HepG2 (cell line): ENCODE measurements at regions of chr11 and their contacts with region 1.

Region 1: DNA sequence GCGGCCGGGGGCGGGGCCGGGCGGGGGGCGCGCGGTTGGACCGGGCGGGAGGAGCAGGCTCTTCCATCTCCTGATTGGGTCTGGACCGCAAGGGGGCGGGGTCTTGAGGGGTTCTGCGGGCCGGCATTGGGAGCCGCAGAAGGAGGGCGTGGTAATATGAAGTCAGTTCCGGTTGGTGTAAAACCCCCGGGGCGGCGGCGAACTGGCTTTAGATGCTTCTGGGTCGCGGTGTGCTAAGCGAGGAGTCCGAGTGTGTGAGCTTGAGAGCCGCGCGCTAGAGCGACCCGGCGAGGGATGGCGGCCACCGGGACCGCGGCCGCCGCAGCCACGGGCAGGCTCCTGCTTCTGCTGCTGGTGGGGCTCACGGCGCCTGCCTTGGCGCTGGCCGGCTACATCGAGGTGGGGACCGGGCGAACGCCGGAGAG is at the start of gene APLP2:
- DNase-seq: peak; percentile 97
- ATAC-seq: peak; percentile 78
- H3K4me3 ChIP-seq: peak within 1 kb of the TSS; percentile 84 to 98 (median 97)
- H3K27ac ChIP-seq: peak within 1 kb of the TSS; percentile 71
- H3K4me1 ChIP-seq: peaks cover 39% of the 10 kb centered on the region
- H3K27me3 ChIP-seq: no peaks in the 10 kb centered on the region
- CTCF ChIP-seq: 0 out of 2 replicates have a peak, but pooled peaks have one; percentile 10
- EP300 ChIP-seq: no peak
- POLR2A ChIP-seq: peak; percentile 98 to 99
- RAD21 ChIP-seq: peak; percentile 57
- total RNA-seq, gene APLP2: 154 and 315 TPM in 2 replicates

Region 2: DNA sequence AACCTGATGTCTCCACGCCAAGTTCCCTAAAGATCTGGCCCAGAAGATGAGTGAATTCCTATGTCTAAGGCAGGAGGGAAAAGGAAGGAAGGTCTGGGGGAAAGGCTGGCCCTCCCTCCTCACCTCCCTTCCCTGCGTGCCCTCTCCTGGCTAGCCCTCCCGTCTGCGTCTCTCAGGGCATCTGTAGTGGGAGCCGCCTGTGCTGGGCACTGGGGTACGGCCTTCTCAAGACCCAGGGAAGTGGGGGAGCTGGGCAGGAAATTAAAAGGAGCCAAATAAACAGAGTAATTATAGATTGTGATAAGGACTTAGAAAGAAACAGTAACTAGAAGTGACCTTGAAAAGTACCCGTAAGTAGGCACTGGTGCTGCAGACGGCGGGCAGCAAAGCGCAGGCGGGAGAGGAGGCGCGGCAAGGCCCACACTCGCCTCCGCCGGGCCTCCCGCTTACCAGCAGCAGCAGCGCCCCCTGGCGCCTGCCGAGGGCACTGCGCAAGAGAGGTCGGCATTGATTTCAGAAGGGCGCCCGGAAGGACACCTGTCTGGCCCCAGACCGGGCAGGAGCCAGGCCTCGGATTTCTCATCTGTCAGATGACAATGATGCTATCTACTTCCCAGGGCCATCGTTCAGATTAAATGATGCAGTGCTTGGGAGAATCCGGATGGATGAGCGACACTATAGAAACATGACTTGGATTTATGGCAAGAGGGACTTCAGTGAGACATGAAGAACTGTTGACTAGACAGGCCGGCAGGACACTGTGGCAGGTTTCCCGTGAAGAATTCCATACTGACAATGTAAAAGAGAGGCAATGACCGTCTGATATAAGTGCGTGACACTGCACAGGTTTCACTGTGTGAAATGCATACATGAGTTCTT is 1209.9 kb before region 1 on chr11:
- CTCF ChIA-PET with region 1: no interaction called
- POLR2A ChIA-PET with region 1: no interaction called
- in situ Hi-C with region 1: no loop called
- intact Hi-C with region 1: no loop called
- DNase-seq: peak; percentile 35
- ATAC-seq: peak; percentile 94
- H3K4me3 ChIP-seq: no peak overlapping the region
- H3K27ac ChIP-seq: no peak overlapping the region
- H3K4me1 ChIP-seq: no peaks in the 10 kb centered on the region
- H3K27me3 ChIP-seq: peaks cover 5 to 51% of the 10 kb centered on the region in 2 experiments; a peak in 4 of 5 replicates
- CTCF ChIP-seq: peak; percentile 85
- EP300 ChIP-seq: no peak
- POLR2A ChIP-seq: no peak
- RAD21 ChIP-seq: peak; percentile 55; the same call in 1 of the 2 replicates

Region 3: GRCh38 chr11:129611661-129612446 is 457.8 kb before region 1 on chr11:
- CTCF ChIA-PET with region 1: no interaction called
- POLR2A ChIA-PET with region 1: no interaction called
- in situ Hi-C with region 1: no loop called
- intact Hi-C with region 1: no loop called
- DNase-seq: no peak
- ATAC-seq: peak; percentile 58
- H3K4me3 ChIP-seq: no peak overlapping the region
- H3K27ac ChIP-seq: no peak overlapping the region
- H3K4me1 ChIP-seq: no peaks in the 10 kb centered on the region
- H3K27me3 ChIP-seq: peaks cover 0 to 29% of the 10 kb centered on the region in 2 experiments; a peak in 1 of 5 replicates
- CTCF ChIP-seq: no peak
- EP300 ChIP-seq: no peak
- POLR2A ChIP-seq: no peak
- RAD21 ChIP-seq: no peak

Region 4: GRCh38 chr11:129695575-129696308 is 374.0 kb before region 1 on chr11:
- CTCF ChIA-PET with region 1: no interaction called
- POLR2A ChIA-PET with region 1: no interaction called
- in situ Hi-C with region 1: no loop called
- intact Hi-C with region 1: no loop called
- DNase-seq: peak; percentile 46
- ATAC-seq: peak; percentile 97
- H3K4me3 ChIP-seq: peak overlapping the region; percentile 11 to 69 (median 46)
- H3K27ac ChIP-seq: no peak overlapping the region
- H3K4me1 ChIP-seq: peaks cover 5% of the 10 kb centered on the region; the same call in 1 of the 2 replicates
- H3K27me3 ChIP-seq: peaks cover 2 to 45% of the 10 kb centered on the region in 2 experiments; a peak in 4 of 5 replicates
- CTCF ChIP-seq: peak; percentile 88
- EP300 ChIP-seq: no peak
- POLR2A ChIP-seq: no peak
- RAD21 ChIP-seq: 0 out of 2 replicates have a peak, but pooled peaks have one; percentile 41

Region 5: GRCh38 chr11:130088919-130089659 is 19.4 kb after region 1 on chr11:
- CTCF ChIA-PET with region 1: no interaction called
- POLR2A ChIA-PET with region 1: interaction called, 17 read pairs
- in situ Hi-C with region 1: no loop called
- intact Hi-C with region 1: no loop called
- DNase-seq: no peak
- ATAC-seq: peak; percentile 80
- H3K4me3 ChIP-seq: peak overlapping the region in 2 of 3 experiments; percentile 28 to 40; a peak in 4 of 6 replicates
- H3K27ac ChIP-seq: peak overlapping the region; percentile 66
- H3K4me1 ChIP-seq: peaks cover 60% of the 10 kb centered on the region
- H3K27me3 ChIP-seq: no peaks in the 10 kb centered on the region
- CTCF ChIP-seq: no peak
- EP300 ChIP-seq: no peak
- POLR2A ChIP-seq: no peak
- RAD21 ChIP-seq: no peak

Region 6: GRCh38 chr11:130124096-130124495 is 54.4 kb after region 1 on chr11:
- CTCF ChIA-PET with region 1: no interaction called
- POLR2A ChIA-PET with region 1: interaction called, 16 read pairs
- in situ Hi-C with region 1: no loop called
- intact Hi-C with region 1: loop called (anchors 2 kb)
- DNase-seq: peak; percentile 97
- ATAC-seq: peak; percentile 99
- H3K4me3 ChIP-seq: no peak overlapping the region
- H3K27ac ChIP-seq: peak overlapping the region; percentile 66
- H3K4me1 ChIP-seq: peaks cover 62% of the 10 kb centered on the region
- H3K27me3 ChIP-seq: no peaks in the 10 kb centered on the region
- CTCF ChIP-seq: peak; percentile 55
- EP300 ChIP-seq: peak; percentile 40 to 86; a peak in 2 of 4 replicates
- POLR2A ChIP-seq: no peak
- RAD21 ChIP-seq: peak; percentile 52